A549 (cell line): ENCODE measurements at regions of chr17 and their contacts with region 1.

Region 1: DNA sequence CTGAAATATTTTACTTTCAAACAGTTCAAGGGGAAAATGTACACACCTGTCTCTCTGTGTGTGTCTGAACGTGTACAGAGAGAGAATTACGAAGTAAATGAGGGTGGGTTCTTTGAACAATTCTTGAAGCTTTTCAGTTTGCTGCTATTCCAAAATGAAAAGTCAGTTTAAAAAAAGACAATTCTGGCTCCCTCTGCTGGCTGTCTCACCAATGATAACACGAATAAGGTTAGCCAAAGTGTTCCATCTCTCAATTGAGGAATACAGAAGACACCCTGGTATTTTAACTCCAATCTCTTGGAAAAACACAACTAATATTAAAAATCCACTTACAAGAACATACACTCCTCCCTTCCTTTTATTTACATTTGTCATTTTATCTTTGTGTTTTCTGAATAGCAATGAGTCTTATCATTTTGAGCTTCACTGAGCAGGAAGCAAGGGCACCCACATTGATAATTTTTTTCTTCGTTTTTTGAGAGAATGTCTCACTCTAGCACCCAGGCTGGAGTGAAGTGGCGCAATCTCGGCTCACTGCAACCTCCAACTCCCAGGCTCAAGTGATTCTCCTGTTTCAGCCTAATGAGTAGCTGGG is 20.5 kb downstream of the EFTUD2 start:
- DNase-seq: peak; percentile 45 to 80
- ATAC-seq: peak; percentile 80 to 85; a peak in 5 of 6 replicates
- H3K4me3 ChIP-seq: no peak overlapping the region
- H3K27ac ChIP-seq: no peak overlapping the region
- H3K4me1 ChIP-seq: no peaks in the 10 kb centered on the region
- CTCF ChIP-seq: peak; percentile 94
- EP300 ChIP-seq: no peak
- POLR2A ChIP-seq: no peak
- RAD21 ChIP-seq: peak; percentile 54

Region 2: DNA sequence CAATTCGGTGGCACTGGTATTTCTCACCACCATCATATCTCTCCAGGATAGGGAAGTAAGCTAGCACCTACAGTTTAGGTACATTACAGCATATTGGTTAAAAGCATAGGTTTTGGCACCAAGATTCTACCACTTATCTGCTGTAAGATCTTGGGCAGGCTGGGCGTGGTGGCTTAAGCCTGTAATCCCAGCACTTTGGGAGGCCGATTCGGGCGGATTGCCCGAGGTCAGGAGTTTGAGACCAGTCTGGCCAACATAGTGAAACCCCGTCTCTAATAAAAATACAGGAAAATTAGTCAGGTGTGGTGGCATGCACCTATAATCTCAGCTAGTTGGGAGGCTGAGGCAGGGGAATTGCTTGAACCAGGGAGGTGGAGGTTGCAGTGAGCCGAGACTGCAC is 426.9 kb before region 1 on chr17:
- CTCF ChIA-PET with region 1: no interaction called
- POLR2A ChIA-PET with region 1: no interaction called
- DNase-seq: no peak
- ATAC-seq: no peak
- H3K4me3 ChIP-seq: no peak overlapping the region
- H3K27ac ChIP-seq: no peak overlapping the region
- H3K4me1 ChIP-seq: no peaks in the 10 kb centered on the region
- CTCF ChIP-seq: no peak
- EP300 ChIP-seq: no peak
- POLR2A ChIP-seq: no peak
- RAD21 ChIP-seq: no peak

Region 3: DNA sequence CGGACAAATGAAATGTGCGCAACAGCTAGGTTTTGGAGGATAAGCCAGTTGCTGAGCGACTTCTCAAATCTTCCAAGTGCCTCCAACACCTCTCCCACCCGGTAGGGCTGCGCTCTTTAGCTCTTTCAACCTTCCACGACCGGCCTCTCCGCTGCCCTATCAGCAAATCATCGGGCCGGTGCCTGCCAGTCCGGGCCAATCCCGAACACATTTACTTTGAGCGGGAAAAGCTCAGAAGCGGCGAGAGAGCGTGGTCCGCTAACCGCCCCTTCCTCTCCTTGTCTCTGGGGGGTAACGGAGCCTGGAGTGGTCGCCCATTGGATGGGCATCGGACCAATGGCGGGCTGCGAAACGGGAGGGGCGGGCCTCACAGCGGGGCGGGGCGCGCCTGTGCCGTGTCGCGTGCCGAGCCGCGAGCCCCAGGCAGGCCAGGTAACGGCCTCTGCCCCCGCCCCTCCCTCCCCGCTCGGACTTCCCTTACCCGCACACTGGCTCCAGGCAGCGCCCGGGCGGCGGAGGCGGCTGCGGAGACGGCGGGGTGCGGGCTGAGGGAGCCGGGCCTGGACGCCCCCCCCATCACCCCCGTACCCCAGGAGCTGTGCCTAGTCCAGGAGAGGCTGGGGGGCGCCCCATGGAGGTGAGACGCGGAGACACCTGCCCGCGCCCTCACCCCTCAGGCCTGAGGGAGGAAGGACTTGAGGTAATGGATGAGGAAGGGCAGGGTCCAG is 222.6 kb before region 1 on chr17 and contains the start of gene MEIOC:
- CTCF ChIA-PET with region 1: no interaction called
- POLR2A ChIA-PET with region 1: no interaction called
- DNase-seq: peak; percentile 95 to 97
- ATAC-seq: peak; percentile 97
- H3K4me3 ChIP-seq: peak within 1 kb of the TSS; percentile 58
- H3K27ac ChIP-seq: peak within 1 kb of the TSS; percentile 71 to 89
- H3K4me1 ChIP-seq: 0 out of 3 replicates have a peak, but pooled peaks cover 4% of the 10 kb centered on the region
- CTCF ChIP-seq: peak; percentile 46
- EP300 ChIP-seq: no peak
- POLR2A ChIP-seq: no peak; the same call in 1 of the 2 replicates
- RAD21 ChIP-seq: peak in 1 of 2 experiments; percentile 19; a peak in 1 of 5 replicates
- polyA plus RNA-seq, gene MEIOC: 18.0 and 18.2 TPM in 2 replicates

Region 4: GRCh38 chr17:44829523-44830358 is 49.0 kb before region 1 on chr17 and contains the start of gene GJC1:
- CTCF ChIA-PET with region 1: interaction called, 10 read pairs
- POLR2A ChIA-PET with region 1: interaction called, 4 read pairs
- DNase-seq: peak; percentile 48 to 49
- ATAC-seq: peak; percentile 73 to 76
- H3K4me3 ChIP-seq: peak within 1 kb of the TSS; percentile 87
- H3K27ac ChIP-seq: peak within 1 kb of the TSS; percentile 77 to 95
- H3K4me1 ChIP-seq: peaks cover 18% of the 10 kb centered on the region
- CTCF ChIP-seq: no peak
- EP300 ChIP-seq: no peak
- POLR2A ChIP-seq: peak; percentile 72
- RAD21 ChIP-seq: no peak
- polyA plus RNA-seq, gene GJC1: 22.1 and 30.4 TPM in 2 replicates

Region 5: DNA sequence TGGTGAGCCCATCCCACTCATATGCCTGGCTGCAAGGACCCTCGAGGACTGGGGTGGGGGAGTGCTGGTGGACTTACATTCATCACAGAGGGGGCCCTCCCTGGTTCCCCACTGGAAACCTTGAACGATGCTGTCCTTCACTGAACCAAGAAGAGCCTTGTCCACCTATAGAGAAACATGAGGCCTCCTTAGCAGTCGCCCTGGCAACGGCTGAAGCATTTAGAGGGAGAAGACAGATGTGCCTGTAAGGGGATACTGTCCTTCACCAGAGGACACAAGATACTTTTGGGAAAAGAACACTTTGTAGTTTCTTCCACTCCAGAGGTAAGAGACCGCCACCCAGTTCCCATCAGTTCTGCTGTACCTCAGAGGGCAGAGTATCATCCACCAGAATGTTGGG is 24.5 kb before region 1 on chr17:
- CTCF ChIA-PET with region 1: interaction called, 61 read pairs
- POLR2A ChIA-PET with region 1: interaction called, 4 read pairs
- DNase-seq: no peak
- ATAC-seq: no peak
- H3K4me3 ChIP-seq: no peak overlapping the region
- H3K27ac ChIP-seq: no peak overlapping the region
- H3K4me1 ChIP-seq: no peaks in the 10 kb centered on the region
- CTCF ChIP-seq: no peak
- EP300 ChIP-seq: no peak
- POLR2A ChIP-seq: no peak
- RAD21 ChIP-seq: no peak

Region 6: GRCh38 chr17:44899069-44899782 is 20.5 kb after region 1 on chr17 and contains the start of gene EFTUD2:
- CTCF ChIA-PET with region 1: interaction called, 223 read pairs
- POLR2A ChIA-PET with region 1: interaction called, 3 read pairs
- DNase-seq: peak; percentile 94 to 96
- ATAC-seq: peak; percentile 83 to 85
- H3K4me3 ChIP-seq: peak within 1 kb of the TSS; percentile 65
- H3K27ac ChIP-seq: peak within 1 kb of the TSS; percentile 87 to 96
- H3K4me1 ChIP-seq: peaks cover 37% of the 10 kb centered on the region
- CTCF ChIP-seq: no peak
- EP300 ChIP-seq: peak in 1 of 2 experiments; percentile 25; a peak in 1 of 5 replicates
- POLR2A ChIP-seq: peak; percentile 85
- RAD21 ChIP-seq: peak in 1 of 2 experiments; percentile 18; a peak in 2 of 5 replicates
- polyA plus RNA-seq, gene EFTUD2: 254 and 353 TPM in 2 replicates

Region 7: DNA sequence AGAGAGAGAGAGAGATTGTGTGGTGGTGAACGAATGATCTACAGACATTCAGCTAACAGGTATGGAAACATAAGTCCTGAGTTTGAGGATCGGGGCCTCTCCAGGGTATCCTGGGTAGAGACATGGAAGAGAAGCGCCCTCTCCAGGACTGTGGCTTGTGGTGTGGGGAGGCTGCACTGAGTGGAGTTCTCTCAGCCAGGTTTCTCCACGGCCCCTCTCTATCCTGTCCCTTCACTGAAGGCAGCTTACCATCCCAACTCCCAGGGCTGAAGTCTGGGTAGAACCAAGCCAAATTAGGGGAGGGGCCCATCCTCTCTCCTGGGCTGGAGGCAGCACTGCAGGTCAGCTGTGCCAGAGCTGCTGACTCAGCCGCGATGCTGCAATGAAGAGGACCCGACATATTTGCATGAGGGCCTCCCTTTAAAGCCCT is 83.2 kb after region 1 on chr17:
- CTCF ChIA-PET with region 1: no interaction called
- POLR2A ChIA-PET with region 1: no interaction called
- DNase-seq: peak in 1 of 2 experiments; percentile 62
- ATAC-seq: peak; percentile 78 to 89
- H3K4me3 ChIP-seq: no peak overlapping the region
- H3K27ac ChIP-seq: peak overlapping the region in 1 of 2 experiments; percentile 0; a peak in 1 of 6 replicates
- H3K4me1 ChIP-seq: peaks cover 18% of the 10 kb centered on the region
- CTCF ChIP-seq: 0 out of 3 replicates have a peak, but pooled peaks have one; percentile 17
- EP300 ChIP-seq: no peak
- POLR2A ChIP-seq: no peak
- RAD21 ChIP-seq: peak; percentile 13 to 54; a peak in 2 of 5 replicates